Spleen (tissue), 13 donors: ENCODE measurements at regions of chr1 and their contacts with region 1.

Region 1: DNA sequence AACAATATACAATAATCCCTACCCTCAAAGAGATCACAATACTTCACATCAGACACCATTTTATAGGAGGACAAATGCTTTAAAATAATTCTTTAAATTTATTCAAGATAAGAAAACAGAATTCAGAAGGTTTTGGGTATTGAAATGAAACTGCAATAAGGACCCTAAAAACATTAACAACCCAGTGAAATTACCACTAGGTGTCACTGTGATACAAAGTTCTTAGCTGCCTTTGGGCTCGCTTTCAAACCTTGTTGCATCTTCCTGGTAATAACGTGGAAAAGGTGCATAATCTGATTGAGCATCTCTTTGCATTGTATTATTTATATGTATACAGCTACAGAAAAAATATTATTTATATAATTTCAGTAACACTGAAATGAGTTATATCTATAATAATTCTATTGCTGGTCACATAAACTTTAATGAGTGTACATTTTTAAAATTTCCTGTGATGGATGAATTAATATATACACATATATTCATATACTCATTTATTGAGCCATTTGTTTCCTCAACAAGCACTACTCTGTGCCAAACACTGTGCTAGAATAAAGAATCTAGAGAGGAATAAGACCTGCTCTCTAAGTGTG is 185.2 kb downstream of the FAF1 start:
- DNase-seq: no peak
- H3K4me3 ChIP-seq: no peak overlapping the region
- H3K27ac ChIP-seq: no peak overlapping the region
- H3K4me1 ChIP-seq: peaks cover 0 to 9% (median 0%) of the 10 kb centered on the region in 6 donors
- H3K27me3 ChIP-seq: no peaks in the 10 kb centered on the region
- CTCF ChIP-seq: peak in 10 of 11 experiments; percentile 18 to 77 (median 66)
- POLR2A ChIP-seq: no peak

Region 2: DNA sequence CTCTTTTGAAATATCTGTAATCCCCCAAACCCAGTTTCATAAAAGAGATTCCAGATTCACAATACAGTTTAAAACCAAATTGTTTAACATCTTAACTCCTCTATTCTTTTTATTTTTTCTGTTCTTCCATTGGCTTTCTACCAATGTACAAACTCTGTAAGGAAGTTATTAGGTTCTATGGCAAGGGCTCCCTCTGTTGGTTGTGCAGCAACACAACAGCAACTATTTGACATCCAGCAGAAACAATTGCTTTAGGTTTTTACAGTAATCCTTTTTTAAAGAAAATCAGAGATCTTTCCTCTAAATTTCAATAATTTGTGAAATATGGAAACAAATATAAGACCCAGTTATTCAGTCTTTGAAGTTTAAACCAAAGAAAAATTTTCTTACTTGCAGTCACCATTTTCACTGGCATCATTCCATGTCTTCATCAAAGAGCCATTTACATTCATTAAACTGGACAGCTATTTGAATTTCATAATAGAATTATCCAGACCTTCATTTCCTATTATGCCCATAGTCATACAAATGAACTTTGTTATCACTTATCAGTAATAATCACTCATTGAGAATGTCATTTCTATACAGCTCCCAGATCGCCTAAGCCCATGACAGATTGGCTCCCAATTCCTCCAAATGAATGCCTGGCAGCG is 414.7 kb after region 1 on chr1:
- intact Hi-C with region 1: loop called (anchors 5 kb)
- DNase-seq: no peak
- H3K4me3 ChIP-seq: no peak overlapping the region
- H3K27ac ChIP-seq: no peak overlapping the region
- H3K4me1 ChIP-seq: peaks cover 0 to 12% (median 0%) of the 10 kb centered on the region in 6 donors
- H3K27me3 ChIP-seq: no peaks in the 10 kb centered on the region
- CTCF ChIP-seq: peak; percentile 56 to 88 (median 84)
- POLR2A ChIP-seq: no peak